ENCODE measurements at regions of chr12 and their contacts with region 1.

Region 1: GRCh38 chr12:116880817-116881324 is 370 bp downstream of the HRK start:
- DNase-seq: peak; percentile 67
- H3K4me3 ChIP-seq: peak overlapping the region; percentile 40
- H3K27ac ChIP-seq: no peak overlapping the region
- H3K4me1 ChIP-seq: peaks cover 27% of the 10 kb centered on the region
- H3K27me3 ChIP-seq: peaks cover 63% of the 10 kb centered on the region
- CTCF ChIP-seq: no peak

Region 2: DNA sequence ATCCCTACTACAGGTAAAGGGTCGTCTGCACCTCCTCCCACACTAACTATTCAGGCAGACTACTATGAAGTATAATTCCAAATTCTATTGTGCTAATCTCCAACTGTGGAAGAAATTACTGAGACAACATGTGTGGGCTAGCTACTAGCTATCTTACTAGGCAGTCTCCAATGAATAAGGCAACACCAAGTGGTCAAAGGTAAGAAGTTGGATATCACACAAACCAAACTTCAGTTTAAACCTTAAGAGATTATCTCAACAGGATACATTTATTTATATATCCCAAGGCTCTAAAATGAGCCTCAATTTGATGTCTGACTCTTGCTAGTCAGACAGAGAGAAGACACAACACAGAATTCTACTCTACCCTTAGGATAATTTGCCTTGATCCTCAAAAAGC is 617.4 kb before region 1 on chr12:
- CTCF ChIA-PET with region 1: interaction called, 10 read pairs
- POLR2A ChIA-PET with region 1: no interaction called
- intact Hi-C with region 1: no loop called
- DNase-seq: no peak
- H3K4me3 ChIP-seq: no peak overlapping the region
- H3K27ac ChIP-seq: no peak overlapping the region
- H3K4me1 ChIP-seq: peaks cover 59% of the 10 kb centered on the region
- H3K27me3 ChIP-seq: no peaks in the 10 kb centered on the region
- CTCF ChIP-seq: no peak

Region 3: GRCh38 chr12:116863275-116863767 is 17.6 kb before region 1 on chr12:
- CTCF ChIA-PET with region 1: interaction called, 14 read pairs
- POLR2A ChIA-PET with region 1: no interaction called
- intact Hi-C with region 1: no loop called
- DNase-seq: peak; percentile 50
- H3K4me3 ChIP-seq: no peak overlapping the region
- H3K27ac ChIP-seq: no peak overlapping the region
- H3K4me1 ChIP-seq: peaks cover 18% of the 10 kb centered on the region
- H3K27me3 ChIP-seq: no peaks in the 10 kb centered on the region
- CTCF ChIP-seq: peak; percentile 82

Region 4: GRCh38 chr12:117178301-117178700 is 297.4 kb after region 1 on chr12:
- CTCF ChIA-PET with region 1: no interaction called
- POLR2A ChIA-PET with region 1: no interaction called
- intact Hi-C with region 1: no loop called
- DNase-seq: no peak
- H3K4me3 ChIP-seq: no peak overlapping the region
- H3K27ac ChIP-seq: no peak overlapping the region
- H3K4me1 ChIP-seq: no peaks in the 10 kb centered on the region
- H3K27me3 ChIP-seq: no peaks in the 10 kb centered on the region
- CTCF ChIP-seq: no peak